Activated T-helper 1 cell treated with anti-CD3 and anti-CD28 coated beads, Interleukin-12 subunit alpha, Interleukin-12 subunit beta, Interleukin-2, Interleukin-4 antibody, amounts not matched to agents 30 ng/mL and 10 ng/mL and 1 ng/mL, durations not matched to agents 14 hours and 24 hours and 36 hours (primary cell): ENCODE measurements at regions of chr10 and their contacts with region 1.

Region 1: DNA sequence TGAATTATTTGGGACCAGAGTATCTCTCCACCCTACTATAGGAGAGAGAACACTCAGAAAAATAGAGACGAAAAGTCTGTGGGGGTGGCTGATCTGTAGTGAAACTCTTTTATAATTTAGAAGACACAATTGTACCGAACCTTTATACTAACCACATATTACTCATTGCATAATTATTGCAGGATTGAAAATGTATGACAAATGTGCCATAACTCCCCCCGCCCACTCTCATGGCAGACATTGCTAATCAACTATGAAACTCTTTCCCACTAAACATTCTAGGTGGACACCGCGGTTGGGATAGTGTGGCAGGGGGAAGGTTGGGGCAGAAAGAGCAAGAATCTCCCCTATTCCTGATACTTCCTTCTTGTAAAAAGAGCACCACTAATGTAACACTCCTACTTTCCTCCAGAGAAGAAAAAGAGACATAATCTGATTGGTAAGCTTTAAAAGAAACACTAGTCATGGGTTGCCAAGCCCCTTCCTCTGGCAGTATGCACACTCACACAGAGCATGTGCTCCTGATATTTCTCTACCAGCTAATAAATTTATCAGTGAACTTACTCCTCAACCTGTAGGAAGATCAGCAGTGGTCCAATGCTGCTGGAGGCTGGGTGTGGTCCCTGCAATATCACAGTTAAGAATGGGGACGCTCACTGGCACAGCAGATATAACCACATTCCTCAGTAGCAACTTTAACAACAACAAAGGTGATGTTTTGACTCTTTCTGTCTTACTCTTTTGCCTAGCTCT is 18.7 kb upstream of the ARID5B start:
- DNase-seq: no peak
- H3K4me3 Mint-ChIP-seq: no peak overlapping the region
- H3K27ac Mint-ChIP-seq: peak overlapping the region; percentile 44
- H3K4me1 Mint-ChIP-seq: peaks cover 19% of the 10 kb centered on the region
- H3K27me3 Mint-ChIP-seq: peaks cover 1% of the 10 kb centered on the region

Region 2: GRCh38 chr10:60944159-60944909 is 938.5 kb before region 1 on chr10 and contains the start of gene RHOBTB1:
- intact Hi-C with region 1: loop called (anchors 10 kb)
- DNase-seq: no peak
- H3K4me3 Mint-ChIP-seq: peak within 1 kb of the TSS; percentile 74
- H3K27ac Mint-ChIP-seq: peak within 1 kb of the TSS; percentile 77
- H3K4me1 Mint-ChIP-seq: peaks cover 9% of the 10 kb centered on the region
- H3K27me3 Mint-ChIP-seq: peaks cover 73% of the 10 kb centered on the region
- total RNA-seq, gene RHOBTB1: not detected in 2 replicates

Region 3: GRCh38 chr10:61786728-61787127 is 96.1 kb before region 1 on chr10:
- intact Hi-C with region 1: loop called (anchors 2 kb)
- DNase-seq: no peak
- H3K4me3 Mint-ChIP-seq: no peak overlapping the region
- H3K27ac Mint-ChIP-seq: no peak overlapping the region
- H3K4me1 Mint-ChIP-seq: peaks cover 51% of the 10 kb centered on the region
- H3K27me3 Mint-ChIP-seq: no peaks in the 10 kb centered on the region

Region 4: DNA sequence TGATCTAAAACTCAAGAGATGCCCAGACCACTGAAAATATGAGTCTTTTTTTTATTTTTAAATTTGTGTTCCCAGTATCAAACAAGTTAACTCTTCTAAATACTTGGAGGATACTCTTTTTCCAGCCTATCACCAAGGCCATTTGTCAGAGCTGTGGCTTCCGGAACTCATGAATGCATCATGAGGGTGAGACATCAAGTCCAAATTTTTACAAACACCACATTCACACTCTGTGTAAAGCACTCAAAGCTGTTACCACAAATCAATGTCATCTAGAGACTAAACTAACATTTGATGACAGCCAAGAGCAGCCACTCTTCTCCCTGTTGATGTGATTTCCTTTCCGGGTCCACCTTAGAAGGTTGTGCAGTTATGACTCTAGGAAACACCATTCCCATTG is 25.1 kb before region 1 on chr10:
- intact Hi-C with region 1: no loop called
- DNase-seq: no peak
- H3K4me3 Mint-ChIP-seq: no peak overlapping the region
- H3K27ac Mint-ChIP-seq: no peak overlapping the region
- H3K4me1 Mint-ChIP-seq: peaks cover 6% of the 10 kb centered on the region
- H3K27me3 Mint-ChIP-seq: peaks cover 6% of the 10 kb centered on the region

Region 5: DNA sequence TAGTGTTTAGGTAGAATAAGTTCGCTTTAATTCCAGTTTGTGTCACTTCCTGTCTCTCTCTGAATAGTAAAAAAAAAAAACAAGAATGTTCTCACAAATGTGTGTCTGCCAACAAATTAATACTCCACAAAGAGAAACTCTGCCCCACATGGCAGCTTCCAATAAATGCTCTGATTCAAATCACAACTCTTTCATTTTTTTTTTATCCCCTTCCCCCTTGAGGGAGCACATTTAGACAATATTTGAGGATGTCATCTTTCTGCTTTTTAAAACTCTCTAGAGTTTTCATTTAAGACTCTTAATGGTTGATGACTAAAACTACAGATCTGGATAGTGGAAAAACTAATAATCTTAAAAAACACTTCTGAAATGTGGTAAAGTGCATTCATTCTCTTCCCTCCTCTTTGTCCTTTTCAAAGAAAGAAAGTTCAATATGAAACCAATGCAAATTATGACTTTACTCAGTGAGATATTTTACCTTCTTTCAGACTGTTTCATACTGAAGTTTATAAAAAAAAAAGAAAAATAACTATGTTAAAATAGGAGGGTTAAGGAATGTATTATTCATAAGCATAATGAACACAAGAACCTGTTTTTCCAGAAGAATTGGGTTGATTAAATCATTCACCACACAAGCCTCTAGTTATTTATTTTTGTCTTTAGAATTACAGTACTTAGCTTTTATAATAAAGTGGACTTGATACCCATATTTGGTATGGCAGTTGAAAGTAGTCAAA is 61.0 kb after region 1 on chr10:
- intact Hi-C with region 1: loop called (anchors 1 kb)
- DNase-seq: no peak
- H3K4me3 Mint-ChIP-seq: peak overlapping the region; percentile 77
- H3K27ac Mint-ChIP-seq: peak overlapping the region; percentile 95
- H3K4me1 Mint-ChIP-seq: peaks cover 58% of the 10 kb centered on the region
- H3K27me3 Mint-ChIP-seq: no peaks in the 10 kb centered on the region

Region 6: DNA sequence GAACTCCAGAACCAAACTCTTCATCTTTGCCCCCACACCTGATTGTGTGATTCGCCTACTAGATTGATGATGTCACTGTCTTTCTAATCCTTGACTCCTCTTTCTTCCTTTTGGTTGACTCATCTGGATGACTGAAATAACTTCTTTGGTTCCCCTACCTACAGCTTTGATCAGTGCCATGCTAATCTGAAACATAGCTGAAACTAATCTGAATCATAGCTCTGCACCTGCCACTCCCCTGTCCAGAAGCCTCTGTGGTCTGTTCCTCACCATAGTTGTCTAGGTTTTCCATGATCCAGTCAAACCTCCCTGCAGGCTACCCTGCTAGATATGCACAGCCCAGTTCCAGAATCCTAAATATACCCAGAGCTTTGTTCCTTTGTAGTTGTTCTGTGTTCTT is 543.3 kb after region 1 on chr10:
- intact Hi-C with region 1: loop called (anchors 5 kb)
- DNase-seq: no peak
- H3K4me3 Mint-ChIP-seq: no peak overlapping the region
- H3K27ac Mint-ChIP-seq: no peak overlapping the region
- H3K4me1 Mint-ChIP-seq: peaks cover 9% of the 10 kb centered on the region
- H3K27me3 Mint-ChIP-seq: peaks cover 2% of the 10 kb centered on the region